Transverse colon (tissue), 4 donors: ENCODE measurements at regions of chr15 and their contacts with region 1.

Region 1: DNA sequence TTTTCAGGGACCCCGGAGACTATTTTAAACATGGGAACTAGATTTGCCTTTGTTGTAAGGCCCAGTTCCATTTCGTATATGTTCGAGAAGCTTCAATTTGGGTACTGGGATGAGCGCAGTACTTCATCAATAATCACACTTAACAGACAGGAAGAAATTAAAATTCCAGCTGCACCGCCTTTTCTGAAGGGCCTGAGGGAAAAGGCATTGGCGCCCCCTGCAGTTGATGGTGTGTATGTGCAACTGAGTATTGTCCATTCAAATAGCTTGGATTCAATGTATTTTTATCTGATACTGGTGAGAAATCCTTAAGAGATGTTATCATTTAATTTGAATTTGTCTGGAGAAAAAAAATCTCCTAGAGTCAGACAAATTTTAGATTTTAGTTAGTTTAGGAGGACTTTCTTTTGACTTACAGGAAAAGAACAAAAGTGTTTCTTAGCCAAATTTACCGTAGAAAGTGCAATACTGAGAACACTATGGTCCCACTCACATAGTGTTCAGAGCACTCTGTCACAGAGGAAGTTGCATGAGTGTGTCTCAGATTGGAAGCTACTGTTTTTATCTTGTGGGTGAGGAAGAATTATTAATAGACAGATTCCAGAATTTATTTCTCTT is 5.4 kb upstream of the ALDH1A2 start:
- DNase-seq: peak; percentile 69
- H3K4me3 ChIP-seq: no peak overlapping the region
- H3K27ac ChIP-seq: no peak overlapping the region
- H3K4me1 ChIP-seq: peaks cover 0 to 8% (median 4%) of the 10 kb centered on the region in 4 donors
- H3K27me3 ChIP-seq: peaks cover 50% of the 10 kb centered on the region
- CTCF ChIP-seq: peak; percentile 76 to 92 (median 83)
- EP300 ChIP-seq: no peak
- POLR2A ChIP-seq: no peak

Region 2: GRCh38 chr15:57561041-57561711 is 509.7 kb before region 1 on chr15:
- in situ Hi-C with region 1: loop called in 1 of 4 experiments (anchors 10 kb)
- intact Hi-C with region 1: no loop called
- DNase-seq: peak; percentile 76
- H3K4me3 ChIP-seq: no peak overlapping the region
- H3K27ac ChIP-seq: peak overlapping the region in 1 of 4 donors; percentile 46
- H3K4me1 ChIP-seq: peaks cover 10 to 28% (median 19%) of the 10 kb centered on the region in 4 donors
- H3K27me3 ChIP-seq: no peaks in the 10 kb centered on the region
- CTCF ChIP-seq: peak; percentile 86 to 95 (median 92)
- EP300 ChIP-seq: no peak
- POLR2A ChIP-seq: no peak

Region 3: GRCh38 chr15:57640935-57641682 is 429.8 kb before region 1 on chr15:
- in situ Hi-C with region 1: loop called in 1 of 4 experiments (anchors 25 kb)
- intact Hi-C with region 1: no loop called
- DNase-seq: no peak
- H3K4me3 ChIP-seq: no peak overlapping the region
- H3K27ac ChIP-seq: no peak overlapping the region
- H3K4me1 ChIP-seq: peaks cover 0 to 6% (median under 1%) of the 10 kb centered on the region in 4 donors
- H3K27me3 ChIP-seq: no peaks in the 10 kb centered on the region
- CTCF ChIP-seq: peak in 3 of 5 experiments; percentile 32 to 37 (median 33)
- EP300 ChIP-seq: no peak
- POLR2A ChIP-seq: no peak

Region 4: GRCh38 chr15:57667171-57667849 is 403.6 kb before region 1 on chr15:
- in situ Hi-C with region 1: loop called in 1 of 4 experiments (anchors 25 kb)
- intact Hi-C with region 1: no loop called
- DNase-seq: no peak
- H3K4me3 ChIP-seq: no peak overlapping the region
- H3K27ac ChIP-seq: peak overlapping the region; percentile 24 to 54 (median 38)
- H3K4me1 ChIP-seq: peaks cover 0 to 32% (median 23%) of the 10 kb centered on the region in 4 donors
- H3K27me3 ChIP-seq: peaks cover 6% of the 10 kb centered on the region
- CTCF ChIP-seq: peak; percentile 17 to 33 (median 22)
- EP300 ChIP-seq: no peak
- POLR2A ChIP-seq: no peak

Region 5: GRCh38 chr15:57732526-57733331 is 338.2 kb before region 1 on chr15:
- in situ Hi-C with region 1: loop called in 3 of 4 experiments (anchors 5 to 25 kb)
- intact Hi-C with region 1: no loop called
- DNase-seq: peak; percentile 62
- H3K4me3 ChIP-seq: no peak overlapping the region
- H3K27ac ChIP-seq: no peak overlapping the region
- H3K4me1 ChIP-seq: no peaks in the 10 kb centered on the region
- H3K27me3 ChIP-seq: no peaks in the 10 kb centered on the region
- CTCF ChIP-seq: peak; percentile 69 to 95 (median 85)
- EP300 ChIP-seq: no peak
- POLR2A ChIP-seq: no peak

Region 6: GRCh38 chr15:57743424-57743823 is 327.5 kb before region 1 on chr15:
- in situ Hi-C with region 1: loop called in 3 of 4 experiments (anchors 10 to 25 kb)
- intact Hi-C with region 1: no loop called
- DNase-seq: no peak
- H3K4me3 ChIP-seq: no peak overlapping the region
- H3K27ac ChIP-seq: no peak overlapping the region
- H3K4me1 ChIP-seq: no peaks in the 10 kb centered on the region
- H3K27me3 ChIP-seq: no peaks in the 10 kb centered on the region
- CTCF ChIP-seq: no peak
- EP300 ChIP-seq: no peak
- POLR2A ChIP-seq: no peak

Region 7: GRCh38 chr15:57866149-57866736 is 204.7 kb before region 1 on chr15:
- in situ Hi-C with region 1: loop called in 3 of 4 experiments (anchors 5 to 10 kb)
- intact Hi-C with region 1: loop called (anchors 10 kb)
- DNase-seq: peak; percentile 76
- H3K4me3 ChIP-seq: no peak overlapping the region
- H3K27ac ChIP-seq: no peak overlapping the region
- H3K4me1 ChIP-seq: peaks cover 0 to 10% (median 5%) of the 10 kb centered on the region in 4 donors
- H3K27me3 ChIP-seq: peaks cover 8% of the 10 kb centered on the region
- CTCF ChIP-seq: peak; percentile 64 to 73 (median 69)
- EP300 ChIP-seq: no peak
- POLR2A ChIP-seq: no peak

Region 8: DNA sequence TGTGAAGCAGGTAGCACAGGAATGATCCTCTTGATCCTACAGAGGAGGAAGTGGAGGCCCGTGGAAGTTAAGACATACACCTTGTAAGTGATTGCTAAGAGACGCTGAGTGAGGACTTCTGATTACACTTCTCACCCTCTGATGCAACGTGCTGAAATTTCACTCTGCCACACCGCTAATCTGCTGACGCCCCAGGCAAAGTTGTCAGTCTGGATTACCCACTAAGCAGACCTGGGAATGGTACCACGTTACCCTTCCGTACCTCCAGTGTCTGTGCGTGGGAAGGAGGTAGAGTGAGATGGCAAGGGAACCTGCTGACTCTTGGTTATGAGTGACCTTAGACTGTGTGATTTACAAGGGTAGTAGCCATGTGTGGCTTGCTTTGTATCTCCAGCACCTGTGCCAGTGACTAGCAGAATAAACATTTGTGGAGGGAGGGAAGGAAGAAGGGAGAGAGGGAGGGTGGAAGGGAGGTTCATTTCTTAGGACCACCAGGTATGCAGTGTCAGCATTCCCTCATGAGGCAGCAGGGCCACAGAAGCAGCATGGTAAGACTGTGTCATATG is 120.4 kb before region 1 on chr15:
- in situ Hi-C with region 1: no loop called
- intact Hi-C with region 1: no loop called
- DNase-seq: no peak
- H3K4me3 ChIP-seq: no peak overlapping the region
- H3K27ac ChIP-seq: no peak overlapping the region
- H3K4me1 ChIP-seq: no peaks in the 10 kb centered on the region
- H3K27me3 ChIP-seq: no peaks in the 10 kb centered on the region
- CTCF ChIP-seq: no peak
- EP300 ChIP-seq: no peak
- POLR2A ChIP-seq: no peak